Posterior cingulate gyrus (tissue), 11 donors: ENCODE measurements at regions of chr12 and their contacts with region 1.

Region 1: GRCh38 chr12:74537707-74538385 is at the start of gene ATXN7L3B:
- DNase-seq: peak; percentile 88 to 99 (median 91)

Region 2: DNA sequence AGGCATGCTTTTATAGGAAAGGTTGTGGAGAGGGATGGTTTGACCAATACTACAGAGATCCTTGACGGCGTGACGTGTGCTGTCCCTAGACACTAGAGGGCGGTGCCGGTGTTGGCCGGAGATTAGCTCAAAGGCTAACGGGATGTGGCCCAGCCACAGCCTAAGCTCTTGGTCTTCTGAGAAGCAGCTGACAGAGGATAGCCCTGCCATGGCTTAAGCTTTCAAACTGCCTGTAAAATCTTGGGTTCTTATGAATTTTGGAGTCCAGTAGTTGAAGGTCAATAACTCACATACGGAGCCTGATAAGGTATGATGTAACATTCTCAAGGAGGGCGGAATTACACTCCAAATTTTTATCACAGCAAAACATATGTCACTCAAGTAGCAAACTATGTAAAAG is 515.9 kb before region 1 on chr12:
- intact Hi-C with region 1: loop called (anchors 10 kb)
- DNase-seq: peak in 9 of 10 donors; percentile 30 to 92 (median 51)

Region 3: GRCh38 chr12:74646831-74647230 is 109.0 kb after region 1 on chr12:
- intact Hi-C with region 1: loop called (anchors 2 kb)
- DNase-seq: peak in 1 of 10 donors; percentile 23